ENCODE measurements at regions of chr6 and their contacts with region 1.

Region 1: DNA sequence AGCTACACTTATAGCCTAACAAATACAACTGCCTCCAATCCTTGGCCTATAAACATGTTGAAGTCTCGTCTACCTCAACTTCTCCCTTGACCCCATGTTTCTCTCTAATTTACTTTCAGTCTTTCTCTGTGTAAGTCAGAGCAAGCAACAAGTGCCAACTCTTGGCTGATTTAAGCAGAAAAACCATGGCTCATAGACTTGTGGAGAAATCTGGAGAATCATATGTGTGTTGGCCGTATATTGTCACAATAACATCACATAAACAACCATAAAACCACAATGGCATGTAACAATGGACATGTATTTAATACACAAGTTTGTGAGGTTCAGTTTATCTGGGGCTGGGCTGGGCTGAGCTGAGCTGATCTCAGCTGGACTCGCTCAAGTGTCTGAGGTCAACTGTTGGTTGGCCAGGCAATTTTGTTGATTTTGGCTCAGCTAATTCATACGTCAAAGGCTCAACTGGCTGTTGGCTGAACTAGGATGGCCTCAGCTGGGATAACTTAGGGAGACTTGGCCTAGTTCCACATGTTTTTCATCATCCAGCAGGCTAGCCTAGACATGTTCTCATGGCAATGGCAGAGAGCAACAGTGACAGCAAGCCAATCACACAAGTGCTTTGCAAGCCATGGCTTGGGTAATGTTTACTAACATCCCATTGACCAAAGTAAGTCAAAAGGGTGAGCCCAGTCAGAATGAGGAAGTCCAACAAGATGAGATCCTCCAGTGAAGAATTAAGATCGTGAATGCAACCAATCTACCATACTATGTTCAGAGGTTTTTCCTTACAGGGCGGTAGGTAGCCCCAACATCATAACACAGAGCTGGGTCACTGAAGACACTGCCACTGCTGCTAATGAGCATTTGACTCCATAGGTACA is 12.9 kb upstream of the TBC1D22B start:
- DNase-seq: peak; percentile 86 to 97
- H3K4me3 ChIP-seq: no peak overlapping the region
- H3K27ac ChIP-seq: peak overlapping the region; percentile 90 to 93
- H3K4me1 ChIP-seq: peaks cover 9 to 40% of the 10 kb centered on the region in 2 donors
- H3K27me3 ChIP-seq: no peaks in the 10 kb centered on the region
- CTCF ChIP-seq: no peak

Region 2: GRCh38 chr6:37134606-37135191 is 110.0 kb before region 1 on chr6:
- intact Hi-C with region 1: loop called (anchors 2 kb)
- DNase-seq: peak; percentile 63 to 93
- H3K4me3 ChIP-seq: no peak overlapping the region
- H3K27ac ChIP-seq: peak overlapping the region; percentile 87 to 92
- H3K4me1 ChIP-seq: peaks cover 9 to 35% of the 10 kb centered on the region in 2 donors
- H3K27me3 ChIP-seq: no peaks in the 10 kb centered on the region
- CTCF ChIP-seq: no peak

Region 3: DNA sequence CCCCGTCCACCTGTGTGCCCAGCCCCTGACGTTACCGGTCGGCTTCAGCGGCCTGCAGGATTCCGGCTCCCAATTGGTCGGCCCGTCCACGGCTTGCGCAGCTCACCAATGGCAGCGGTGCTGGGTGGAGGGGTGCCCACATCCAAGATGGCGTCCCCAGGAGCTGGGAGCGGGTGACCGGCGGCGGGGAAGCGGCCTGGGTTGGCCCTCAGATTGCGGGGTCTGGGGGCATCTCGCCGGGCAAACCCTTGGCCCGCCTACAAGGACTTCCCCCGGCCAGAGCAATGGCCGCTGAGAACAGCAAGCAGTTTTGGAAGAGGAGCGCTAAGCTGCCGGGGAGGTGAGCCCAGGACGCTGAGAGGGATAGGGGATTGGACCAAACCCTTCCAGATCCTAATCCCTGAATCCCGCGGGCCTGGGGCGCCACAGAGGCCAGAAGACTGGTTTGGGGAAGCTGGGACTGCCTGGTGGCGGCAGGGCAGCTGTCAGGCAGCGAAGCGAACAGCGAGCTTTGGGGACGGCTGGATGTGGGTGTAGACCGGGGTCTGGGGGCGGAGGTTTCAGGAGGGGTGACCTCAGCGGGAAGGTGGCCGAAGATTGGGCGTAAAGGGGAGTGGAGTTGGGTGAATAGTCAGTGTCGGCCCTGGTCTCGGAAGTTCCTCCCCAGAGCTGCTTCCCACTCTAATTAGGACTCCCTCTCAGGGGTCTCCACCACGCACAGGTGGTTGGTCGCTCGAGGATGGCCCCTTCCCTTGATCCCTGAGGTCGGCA is 13.1 kb after region 1 on chr6 and contains the starts of genes TBC1D22B and TMEM217:
- intact Hi-C with region 1: loop called (anchors 1 kb)
- DNase-seq: peak; percentile 89 to 98
- H3K4me3 ChIP-seq: peak within 1 kb of the TSS; percentile 89 to 90
- H3K27ac ChIP-seq: peak within 1 kb of the TSS; percentile 84 to 88
- H3K4me1 ChIP-seq: peaks cover 7 to 8% of the 10 kb centered on the region in 2 donors
- H3K27me3 ChIP-seq: no peaks in the 10 kb centered on the region
- CTCF ChIP-seq: no peak
- total RNA-seq, gene TBC1D22B: 11.1 TPM
- total RNA-seq, gene TMEM217: not detected

Region 4: DNA sequence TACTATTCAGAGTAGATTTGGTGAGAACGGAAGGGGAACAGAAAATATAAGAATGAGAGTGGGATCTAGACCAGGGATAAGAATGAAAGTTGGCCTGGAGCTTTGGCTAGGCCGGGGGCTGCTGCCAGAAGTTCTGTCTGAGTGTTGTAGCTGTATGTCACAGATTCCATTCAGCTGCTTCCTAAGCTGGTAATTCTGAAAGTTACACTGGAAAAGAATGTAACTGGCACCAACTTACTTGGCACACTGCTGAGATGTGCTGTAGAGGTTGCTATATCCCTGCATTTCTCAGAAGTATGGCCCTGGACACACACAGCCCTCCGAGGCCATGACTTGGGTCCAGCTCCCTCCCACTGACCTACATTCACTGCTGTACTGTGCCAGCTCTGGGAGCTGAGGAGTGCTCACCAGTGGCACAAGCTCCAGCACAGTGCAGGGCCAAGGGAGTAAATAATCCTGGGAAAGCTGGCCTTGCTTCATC is 39.0 kb after region 1 on chr6:
- intact Hi-C with region 1: loop called (anchors 1 kb)
- DNase-seq: peak; percentile 67 to 92
- H3K4me3 ChIP-seq: no peak overlapping the region
- H3K27ac ChIP-seq: peak overlapping the region; percentile 92 to 94
- H3K4me1 ChIP-seq: peaks cover 15 to 47% of the 10 kb centered on the region in 2 donors
- H3K27me3 ChIP-seq: no peaks in the 10 kb centered on the region
- CTCF ChIP-seq: no peak

Measured in ascending aorta (tissue), 2 donors.